Uterus (tissue), 4 donors: ENCODE measurements at regions of chr12 and their contacts with region 1.

Region 1: DNA sequence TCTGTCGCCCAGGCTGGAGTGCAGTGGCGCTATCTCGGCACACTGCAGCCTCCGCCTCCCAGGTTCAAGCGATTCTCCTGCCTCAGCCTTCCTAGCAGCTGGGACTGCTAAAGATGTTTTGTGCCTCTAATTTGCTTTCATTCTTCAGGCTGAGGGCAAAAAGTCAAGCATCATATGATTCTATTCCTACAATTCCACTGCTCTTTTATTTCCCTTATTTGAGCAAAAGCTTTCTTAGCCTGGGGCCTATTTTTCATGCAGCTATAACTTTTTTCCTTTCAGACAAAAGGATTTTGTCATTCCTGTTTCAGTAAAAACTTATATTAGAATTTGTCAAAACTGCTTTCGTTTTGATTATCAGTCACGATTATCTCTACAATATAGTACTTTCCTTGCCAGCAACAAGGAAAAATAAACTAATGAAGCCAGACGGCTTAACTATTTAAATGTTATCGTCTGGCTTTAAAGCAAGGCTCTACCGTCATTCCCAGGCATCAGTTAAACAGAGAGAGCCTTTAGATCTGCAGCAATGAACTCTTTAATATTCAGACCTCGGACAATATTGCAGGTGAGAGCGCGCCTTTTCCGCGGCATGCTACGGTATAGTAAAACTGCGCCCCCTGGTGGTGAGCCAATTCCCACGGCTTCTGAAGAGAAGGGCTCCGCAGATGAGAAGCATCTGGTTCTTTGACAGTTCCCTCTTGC is 1.4 kb upstream of the SLC2A13 start:
- DNase-seq: peak; percentile 88 to 95
- H3K4me3 ChIP-seq: peak overlapping the region; percentile 21 to 94
- H3K27ac ChIP-seq: peak overlapping the region; percentile 91 to 94
- H3K4me1 ChIP-seq: no peaks in the 10 kb centered on the region
- H3K27me3 ChIP-seq: no peaks in the 10 kb centered on the region
- CTCF ChIP-seq: peak; percentile 81 to 94 (median 88)
- POLR2A ChIP-seq: no peak

Region 2: GRCh38 chr12:39946361-39946948 is 160.8 kb before region 1 on chr12:
- intact Hi-C with region 1: no loop called
- DNase-seq: no peak
- H3K4me3 ChIP-seq: no peak overlapping the region
- H3K27ac ChIP-seq: no peak overlapping the region
- H3K4me1 ChIP-seq: no peaks in the 10 kb centered on the region
- H3K27me3 ChIP-seq: no peaks in the 10 kb centered on the region
- CTCF ChIP-seq: no peak
- POLR2A ChIP-seq: no peak

Region 3: DNA sequence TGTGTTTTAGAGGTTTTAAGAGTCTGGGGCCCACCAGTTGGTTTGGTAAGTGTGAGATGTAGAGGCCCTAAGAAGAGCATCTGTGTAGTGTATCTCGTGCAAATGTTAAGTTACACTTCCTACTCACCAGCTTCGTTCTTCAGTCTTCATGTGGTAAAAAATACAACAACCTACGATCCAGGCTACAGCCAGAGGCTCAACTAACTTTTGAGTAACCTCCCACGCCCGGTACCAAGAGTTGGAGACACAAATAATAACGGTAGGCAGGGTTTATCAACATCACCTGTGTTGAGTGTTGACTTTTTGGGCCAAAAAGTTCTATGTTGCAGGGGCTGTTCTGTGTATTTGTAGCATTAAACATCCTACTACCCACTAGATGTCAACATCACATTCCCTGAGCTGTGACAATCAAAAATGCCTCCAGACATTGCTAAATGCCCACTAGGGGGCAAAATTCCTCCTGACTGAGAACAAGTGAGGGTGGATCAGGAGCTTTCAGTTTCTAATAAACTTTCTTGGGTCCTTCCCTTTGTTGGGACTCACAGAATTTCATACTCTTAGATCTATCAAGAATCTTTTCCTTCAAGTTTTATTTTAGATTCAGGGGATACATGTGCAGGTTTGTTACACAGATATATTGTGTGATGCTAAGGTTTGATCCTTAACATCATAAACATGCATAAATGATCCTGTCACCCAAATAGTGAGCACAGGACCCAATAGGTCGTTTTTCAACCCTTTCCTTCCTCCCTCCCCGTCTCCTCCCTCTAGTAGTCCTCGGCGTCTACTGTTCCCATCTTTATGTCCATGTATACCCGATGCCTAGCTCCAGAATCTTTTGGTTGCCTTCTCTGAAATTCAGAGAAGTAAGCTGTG is 96.1 kb before region 1 on chr12:
- intact Hi-C with region 1: loop called (anchors 5 kb)
- DNase-seq: peak; percentile 21 to 44
- H3K4me3 ChIP-seq: no peak overlapping the region
- H3K27ac ChIP-seq: peak overlapping the region in 1 of 2 donors; percentile 11
- H3K4me1 ChIP-seq: no peaks in the 10 kb centered on the region
- H3K27me3 ChIP-seq: no peaks in the 10 kb centered on the region
- CTCF ChIP-seq: peak; percentile 45 to 70 (median 63)
- POLR2A ChIP-seq: no peak